ENCODE measurements at regions of chr2 and their contacts with region 1.

Region 1: DNA sequence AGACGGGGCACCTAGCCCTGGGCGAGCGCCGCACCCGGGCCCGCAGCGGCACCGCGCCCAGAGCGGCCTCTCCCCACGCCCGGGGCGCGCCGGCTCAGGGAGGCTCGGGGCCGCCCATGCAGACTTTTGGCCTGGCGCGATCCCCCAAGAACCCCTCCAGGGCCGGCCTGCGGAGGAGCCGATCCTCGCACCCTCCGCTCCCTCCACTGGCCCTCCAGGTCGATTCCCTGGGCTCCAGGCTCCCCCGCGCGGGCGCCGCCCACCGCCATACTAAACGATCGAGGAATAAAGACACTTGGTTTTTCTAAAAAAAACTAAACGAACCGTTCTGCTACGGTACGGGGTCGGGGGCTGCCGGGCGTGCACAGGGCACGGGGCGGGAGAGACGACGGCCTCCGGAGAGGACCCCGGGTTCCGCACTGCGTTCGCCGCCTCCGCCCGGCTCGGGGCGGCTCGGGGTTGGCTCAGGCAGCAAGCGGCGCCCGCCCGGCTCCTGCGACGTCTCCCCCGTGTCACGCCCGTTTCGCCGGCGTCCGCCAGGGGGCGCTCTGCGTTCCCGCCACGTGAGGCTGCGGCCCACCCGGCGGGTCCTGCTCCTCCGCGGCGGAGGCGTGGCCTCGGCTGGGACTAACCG is 365 bp upstream of the KHK start:
- DNase-seq: peak; percentile 87
- ATAC-seq: peak; percentile 83
- H3K4me3 ChIP-seq: peak overlapping the region; percentile 51 to 99 (median 74)
- H3K27ac ChIP-seq: peak overlapping the region; percentile 65
- H3K4me1 ChIP-seq: peaks cover 74% of the 10 kb centered on the region
- H3K27me3 ChIP-seq: no peaks in the 10 kb centered on the region
- CTCF ChIP-seq: peak; percentile 87
- EP300 ChIP-seq: peak in 1 of 2 experiments; percentile 18; a peak in 1 of 4 replicates
- POLR2A ChIP-seq: no peak
- RAD21 ChIP-seq: peak; percentile 94

Region 2: GRCh38 chr2:26144953-26145680 is 941.1 kb before region 1 on chr2:
- CTCF ChIA-PET with region 1: no interaction called
- POLR2A ChIA-PET with region 1: no interaction called
- in situ Hi-C with region 1: no loop called
- intact Hi-C with region 1: no loop called
- DNase-seq: peak; percentile 69
- ATAC-seq: peak; percentile 58
- H3K4me3 ChIP-seq: no peak overlapping the region
- H3K27ac ChIP-seq: no peak overlapping the region
- H3K4me1 ChIP-seq: no peaks in the 10 kb centered on the region
- H3K27me3 ChIP-seq: peaks cover under 1 to 13% of the 10 kb centered on the region in 2 experiments; a peak in 2 of 5 replicates
- CTCF ChIP-seq: peak; percentile 83
- EP300 ChIP-seq: no peak
- POLR2A ChIP-seq: no peak
- RAD21 ChIP-seq: peak; percentile 86

Region 3: DNA sequence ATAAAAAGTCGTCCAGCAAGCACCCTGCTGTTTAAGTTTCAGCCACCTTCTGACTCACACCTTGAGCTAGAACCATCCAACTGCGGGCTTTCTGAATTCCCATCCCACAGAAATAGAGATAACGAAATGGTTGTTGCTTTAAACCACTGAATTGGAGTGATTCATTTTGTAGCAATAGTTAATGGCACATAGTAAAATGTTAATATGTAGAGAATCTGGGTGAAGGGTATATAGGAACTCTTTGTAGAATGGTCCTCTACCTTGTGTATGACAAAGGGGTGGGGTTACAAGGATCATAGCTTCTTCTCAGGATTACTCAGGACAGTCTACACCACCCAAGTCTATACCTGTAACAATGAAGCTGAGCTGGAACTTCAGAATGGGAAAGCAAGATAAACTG is 118.2 kb before region 1 on chr2:
- CTCF ChIA-PET with region 1: no interaction called
- POLR2A ChIA-PET with region 1: no interaction called
- in situ Hi-C with region 1: no loop called
- intact Hi-C with region 1: loop called (anchors 5 kb)
- DNase-seq: no peak
- ATAC-seq: no peak
- H3K4me3 ChIP-seq: no peak overlapping the region
- H3K27ac ChIP-seq: no peak overlapping the region
- H3K4me1 ChIP-seq: peaks cover 13% of the 10 kb centered on the region
- H3K27me3 ChIP-seq: peaks cover 0 to 41% of the 10 kb centered on the region in 2 experiments; a peak in 4 of 5 replicates
- CTCF ChIP-seq: no peak
- EP300 ChIP-seq: no peak
- POLR2A ChIP-seq: no peak
- RAD21 ChIP-seq: no peak

Region 4: GRCh38 chr2:27050281-27050995 is 35.8 kb before region 1 on chr2:
- CTCF ChIA-PET with region 1: interaction called, 3 read pairs
- POLR2A ChIA-PET with region 1: interaction called, 58 read pairs
- in situ Hi-C with region 1: no loop called
- intact Hi-C with region 1: loop called (anchors 1 kb)
- DNase-seq: peak; percentile 93
- ATAC-seq: peak; percentile 75
- H3K4me3 ChIP-seq: peak overlapping the region; percentile 86 to 97 (median 91)
- H3K27ac ChIP-seq: peak overlapping the region; percentile 81
- H3K4me1 ChIP-seq: peaks cover 24% of the 10 kb centered on the region
- H3K27me3 ChIP-seq: no peaks in the 10 kb centered on the region; a peak in 1 of 5 replicates
- CTCF ChIP-seq: peak; percentile 49
- EP300 ChIP-seq: no peak
- POLR2A ChIP-seq: peak; percentile 86 to 98
- RAD21 ChIP-seq: peak; percentile 48

Region 5: DNA sequence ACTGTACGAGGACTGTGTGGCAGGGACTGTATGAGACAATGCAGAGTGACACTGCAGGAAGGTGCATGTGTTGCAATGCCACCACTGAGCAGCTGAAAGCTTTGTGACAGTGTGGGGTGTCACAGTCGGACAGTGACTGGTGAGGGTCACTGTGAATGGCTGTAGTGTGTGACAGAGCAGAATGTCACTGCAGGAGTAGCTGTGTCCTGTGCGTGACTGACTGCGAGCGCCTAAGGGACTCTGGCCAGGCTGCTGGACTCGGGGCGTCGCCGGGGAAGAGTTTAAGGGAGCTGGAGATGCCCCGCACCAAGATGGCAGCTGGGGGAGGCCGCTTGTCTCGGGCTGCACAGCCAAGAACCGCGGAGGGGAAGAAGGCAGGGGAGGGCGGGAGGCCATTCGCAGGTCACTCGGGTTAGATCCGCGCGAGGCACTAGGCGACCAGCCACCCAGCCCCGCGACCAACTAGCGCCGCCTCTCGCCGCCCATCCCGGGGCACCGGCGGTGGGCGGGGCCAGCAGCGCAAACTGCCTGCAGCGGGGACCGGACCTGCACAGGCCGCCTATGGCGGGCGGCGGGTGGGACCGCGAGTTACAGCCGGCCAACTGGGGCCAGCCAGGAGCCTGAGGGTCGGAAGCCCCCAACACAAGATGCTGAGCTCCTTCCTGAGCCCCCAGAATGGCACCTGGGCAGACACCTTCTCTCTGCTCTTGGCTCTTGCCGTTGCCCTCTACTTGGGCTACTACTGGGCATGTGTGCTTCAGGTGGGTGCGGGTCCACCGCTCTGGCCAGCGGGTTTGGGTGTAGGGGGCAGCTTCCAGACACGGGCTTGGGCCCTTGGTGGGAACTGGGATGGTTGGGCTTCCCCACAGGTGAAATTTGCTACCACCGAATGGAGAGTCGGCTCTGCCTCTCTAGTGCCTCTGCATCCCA is 37.4 kb after region 1 on chr2 and contains the start of gene ABHD1:
- CTCF ChIA-PET with region 1: no interaction called
- POLR2A ChIA-PET with region 1: interaction called, 10 read pairs
- in situ Hi-C with region 1: no loop called
- intact Hi-C with region 1: no loop called
- DNase-seq: peak; percentile 59
- ATAC-seq: peak; percentile 78
- H3K4me3 ChIP-seq: peak within 1 kb of the TSS; percentile 46 to 80 (median 62)
- H3K27ac ChIP-seq: no peak within 1 kb of the TSS
- H3K4me1 ChIP-seq: peaks cover 60% of the 10 kb centered on the region
- H3K27me3 ChIP-seq: peaks cover 2 to 42% of the 10 kb centered on the region in 2 experiments; a peak in 4 of 5 replicates
- CTCF ChIP-seq: peak; percentile 73
- EP300 ChIP-seq: no peak
- POLR2A ChIP-seq: peak; percentile 27 to 90
- RAD21 ChIP-seq: 0 out of 2 replicates have a peak, but pooled peaks have one; percentile 45
- total RNA-seq, gene ABHD1: 0.04 TPM in 1 of 2 replicates, not detected in the other

Region 6: DNA sequence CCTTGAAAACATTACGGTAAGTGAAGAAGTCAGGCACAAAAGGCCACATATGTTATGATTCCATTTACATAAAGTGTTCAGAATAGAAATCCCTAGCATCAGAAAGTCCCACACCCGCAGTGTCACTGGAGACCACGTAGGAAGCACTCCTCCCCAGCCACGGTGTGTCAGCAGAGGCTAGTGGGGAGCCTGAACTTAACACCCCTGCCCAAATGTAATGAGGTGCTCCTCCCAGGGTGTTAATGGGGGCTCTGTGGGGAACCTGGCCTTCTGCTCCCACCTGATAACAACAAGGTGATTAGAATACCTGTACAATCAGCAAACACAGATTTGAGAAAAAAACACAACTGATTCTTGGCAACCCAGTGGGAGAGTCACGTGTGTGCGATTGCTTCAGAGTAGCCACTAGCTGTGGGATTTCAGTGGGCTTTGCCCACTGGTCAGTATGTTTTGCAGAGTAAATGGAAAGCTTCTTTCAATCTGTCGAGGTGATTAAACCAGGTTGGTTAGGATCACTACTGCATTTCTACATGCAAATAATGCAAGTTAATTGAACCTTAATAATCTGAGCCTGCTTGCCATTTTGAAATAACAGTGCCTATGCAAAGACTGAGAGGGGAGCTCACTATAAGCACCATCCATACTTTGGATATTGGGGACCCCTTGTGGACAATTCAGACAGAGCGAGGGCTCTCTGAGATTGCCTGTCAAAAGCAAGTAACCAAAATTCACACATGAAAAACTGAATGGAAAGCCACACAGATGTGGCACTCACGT is 105.0 kb after region 1 on chr2:
- CTCF ChIA-PET with region 1: interaction called, 9 read pairs
- POLR2A ChIA-PET with region 1: interaction called, 12 read pairs
- in situ Hi-C with region 1: no loop called
- intact Hi-C with region 1: no loop called
- DNase-seq: peak; percentile 87
- ATAC-seq: peak; percentile 93
- H3K4me3 ChIP-seq: no peak overlapping the region
- H3K27ac ChIP-seq: peak overlapping the region; percentile 7
- H3K4me1 ChIP-seq: peaks cover 43% of the 10 kb centered on the region
- H3K27me3 ChIP-seq: no peaks in the 10 kb centered on the region
- CTCF ChIP-seq: peak; percentile 93
- EP300 ChIP-seq: peak in 1 of 2 experiments; percentile 25; a peak in 1 of 4 replicates
- POLR2A ChIP-seq: no peak
- RAD21 ChIP-seq: peak; percentile 97

Region 7: GRCh38 chr2:28247290-28247689 is 1161.1 kb after region 1 on chr2:
- CTCF ChIA-PET with region 1: no interaction called
- POLR2A ChIA-PET with region 1: no interaction called
- in situ Hi-C with region 1: no loop called
- intact Hi-C with region 1: loop called (anchors 5 kb)
- DNase-seq: no peak
- ATAC-seq: no peak
- H3K4me3 ChIP-seq: no peak overlapping the region
- H3K27ac ChIP-seq: no peak overlapping the region
- H3K4me1 ChIP-seq: no peaks in the 10 kb centered on the region
- H3K27me3 ChIP-seq: no peaks in the 10 kb centered on the region
- CTCF ChIP-seq: no peak
- EP300 ChIP-seq: no peak
- POLR2A ChIP-seq: no peak
- RAD21 ChIP-seq: no peak